ENCODE measurements at regions of chr2 and their contacts with region 1.

Region 1: DNA sequence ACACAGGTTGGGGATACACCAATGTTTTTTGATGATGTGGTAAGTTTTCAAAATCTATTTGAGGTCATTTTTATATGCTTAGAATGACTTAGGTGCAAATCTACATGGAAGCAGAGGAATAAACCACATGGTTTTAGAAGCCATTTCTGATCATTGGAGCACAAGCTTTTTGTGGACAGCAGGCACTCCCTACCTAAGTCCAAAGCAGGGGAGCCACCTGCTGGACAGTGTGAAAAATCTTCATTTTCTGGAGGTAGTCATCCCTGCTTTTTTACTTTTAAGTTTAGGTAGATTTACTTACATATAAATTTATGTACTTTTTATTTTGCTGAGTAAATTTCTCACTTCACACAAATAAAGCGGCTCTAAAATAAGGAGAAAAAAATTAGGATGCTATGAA is 323.2 kb downstream of the PLCL1 start:
- DNase-seq: peak; percentile 76
- H3K4me3 Mint-ChIP-seq: no peak overlapping the region
- H3K27ac Mint-ChIP-seq: no peak overlapping the region
- H3K4me1 Mint-ChIP-seq: no peaks in the 10 kb centered on the region
- H3K27me3 Mint-ChIP-seq: peaks cover 35% of the 10 kb centered on the region
- CTCF ChIP-seq: peak; percentile 62

Region 2: GRCh38 chr2:197786010-197786877 is 341.4 kb before region 1 on chr2:
- CTCF ChIA-PET with region 1: interaction called, 10 read pairs
- POLR2A ChIA-PET with region 1: no interaction called
- intact Hi-C with region 1: no loop called
- DNase-seq: no peak
- H3K4me3 Mint-ChIP-seq: no peak overlapping the region
- H3K27ac Mint-ChIP-seq: no peak overlapping the region
- H3K4me1 Mint-ChIP-seq: no peaks in the 10 kb centered on the region
- H3K27me3 Mint-ChIP-seq: no peaks in the 10 kb centered on the region
- CTCF ChIP-seq: no peak

Region 3: DNA sequence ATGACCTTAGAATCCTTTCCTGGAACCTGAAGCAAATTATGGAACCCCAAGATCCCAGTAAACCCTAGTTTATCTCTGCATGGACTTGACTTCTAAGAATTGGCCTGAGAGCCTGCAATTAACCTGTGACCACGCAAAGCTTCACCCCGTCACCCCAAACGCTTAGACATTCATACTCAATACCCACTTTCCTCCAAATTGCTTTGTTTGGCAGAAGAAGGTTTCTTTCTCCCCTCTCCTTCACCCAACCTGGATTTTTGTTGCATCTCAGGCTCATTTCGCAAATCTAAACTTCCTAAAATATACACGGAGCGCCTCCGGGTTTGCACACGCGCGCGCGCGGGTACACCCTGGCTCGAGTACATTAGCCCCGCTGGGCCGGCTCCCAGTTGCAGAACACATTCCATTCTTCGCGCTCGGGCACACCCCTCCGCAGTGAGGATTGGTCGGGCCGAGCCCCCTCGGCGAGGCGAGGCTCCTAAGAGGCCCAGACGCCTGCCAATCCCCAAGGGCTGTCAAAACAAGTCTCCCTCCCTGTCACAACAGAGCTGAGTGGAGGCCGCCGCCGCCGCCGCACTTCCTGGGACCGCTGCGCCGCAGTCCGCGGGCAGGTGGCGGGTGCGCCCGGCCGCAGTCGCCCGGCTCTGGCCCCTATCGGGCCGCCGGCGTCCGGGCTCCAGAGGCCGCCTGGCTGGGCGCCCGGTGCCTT is 323.4 kb before region 1 on chr2 and contains the start of gene PLCL1:
- CTCF ChIA-PET with region 1: interaction called, 47 read pairs
- POLR2A ChIA-PET with region 1: interaction called, 4 read pairs
- intact Hi-C with region 1: loop called (anchors 1 kb)
- DNase-seq: peak; percentile 92
- H3K4me3 Mint-ChIP-seq: peak within 1 kb of the TSS; percentile 74
- H3K27ac Mint-ChIP-seq: peak within 1 kb of the TSS; percentile 73
- H3K4me1 Mint-ChIP-seq: peaks cover 6% of the 10 kb centered on the region
- H3K27me3 Mint-ChIP-seq: peaks cover 18% of the 10 kb centered on the region
- CTCF ChIP-seq: no peak
- total RNA-seq, gene PLCL1: 0.12 and 0.22 TPM in 2 replicates

Region 4: DNA sequence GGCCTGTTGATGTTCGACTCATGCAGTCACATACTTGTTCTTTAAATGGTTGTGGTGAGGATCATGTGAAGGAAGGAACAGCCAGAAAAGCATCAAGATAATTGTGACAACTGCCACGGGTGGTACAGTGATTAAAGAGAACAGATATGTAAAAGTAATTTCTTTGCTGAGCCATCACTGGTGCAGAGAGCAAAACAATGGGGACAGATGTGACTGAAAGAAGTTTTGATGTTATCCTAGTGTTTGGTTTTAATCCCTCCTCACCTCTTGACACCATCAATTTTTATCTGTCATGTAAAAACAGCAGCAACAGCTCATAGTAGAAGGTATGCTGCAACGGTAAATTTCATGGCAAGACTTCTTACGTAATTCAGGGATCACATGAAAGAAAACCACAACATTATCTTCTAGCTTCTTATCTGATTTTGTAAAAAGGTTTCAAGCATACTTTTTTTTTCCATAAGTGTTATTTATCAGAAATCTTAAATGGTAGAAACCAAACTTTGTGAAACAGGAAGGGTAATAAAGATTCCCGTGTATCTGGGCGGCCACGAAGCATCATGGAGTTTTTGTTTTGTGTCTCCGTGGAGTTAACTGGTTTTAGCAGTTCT is 258.0 kb before region 1 on chr2:
- CTCF ChIA-PET with region 1: no interaction called
- POLR2A ChIA-PET with region 1: no interaction called
- intact Hi-C with region 1: no loop called
- DNase-seq: no peak
- H3K4me3 Mint-ChIP-seq: no peak overlapping the region
- H3K27ac Mint-ChIP-seq: peak overlapping the region; percentile 49
- H3K4me1 Mint-ChIP-seq: peaks cover 10% of the 10 kb centered on the region
- H3K27me3 Mint-ChIP-seq: no peaks in the 10 kb centered on the region
- CTCF ChIP-seq: no peak

Region 5: GRCh38 chr2:198053776-198054698 is 73.6 kb before region 1 on chr2:
- CTCF ChIA-PET with region 1: interaction called, 3 read pairs
- POLR2A ChIA-PET with region 1: no interaction called
- intact Hi-C with region 1: loop called (anchors 10 kb)
- DNase-seq: peak; percentile 46
- H3K4me3 Mint-ChIP-seq: no peak overlapping the region
- H3K27ac Mint-ChIP-seq: no peak overlapping the region
- H3K4me1 Mint-ChIP-seq: no peaks in the 10 kb centered on the region
- H3K27me3 Mint-ChIP-seq: no peaks in the 10 kb centered on the region
- CTCF ChIP-seq: peak; percentile 27

Region 6: GRCh38 chr2:198117406-198118041 is 10.1 kb before region 1 on chr2:
- CTCF ChIA-PET with region 1: interaction called, 14 read pairs
- POLR2A ChIA-PET with region 1: no interaction called
- intact Hi-C with region 1: no loop called
- DNase-seq: no peak
- H3K4me3 Mint-ChIP-seq: no peak overlapping the region
- H3K27ac Mint-ChIP-seq: no peak overlapping the region
- H3K4me1 Mint-ChIP-seq: no peaks in the 10 kb centered on the region
- H3K27me3 Mint-ChIP-seq: peaks cover 20% of the 10 kb centered on the region
- CTCF ChIP-seq: no peak